K562 (cell line): ENCODE measurements at regions of chr17 and their contacts with region 1.

Region 1: DNA sequence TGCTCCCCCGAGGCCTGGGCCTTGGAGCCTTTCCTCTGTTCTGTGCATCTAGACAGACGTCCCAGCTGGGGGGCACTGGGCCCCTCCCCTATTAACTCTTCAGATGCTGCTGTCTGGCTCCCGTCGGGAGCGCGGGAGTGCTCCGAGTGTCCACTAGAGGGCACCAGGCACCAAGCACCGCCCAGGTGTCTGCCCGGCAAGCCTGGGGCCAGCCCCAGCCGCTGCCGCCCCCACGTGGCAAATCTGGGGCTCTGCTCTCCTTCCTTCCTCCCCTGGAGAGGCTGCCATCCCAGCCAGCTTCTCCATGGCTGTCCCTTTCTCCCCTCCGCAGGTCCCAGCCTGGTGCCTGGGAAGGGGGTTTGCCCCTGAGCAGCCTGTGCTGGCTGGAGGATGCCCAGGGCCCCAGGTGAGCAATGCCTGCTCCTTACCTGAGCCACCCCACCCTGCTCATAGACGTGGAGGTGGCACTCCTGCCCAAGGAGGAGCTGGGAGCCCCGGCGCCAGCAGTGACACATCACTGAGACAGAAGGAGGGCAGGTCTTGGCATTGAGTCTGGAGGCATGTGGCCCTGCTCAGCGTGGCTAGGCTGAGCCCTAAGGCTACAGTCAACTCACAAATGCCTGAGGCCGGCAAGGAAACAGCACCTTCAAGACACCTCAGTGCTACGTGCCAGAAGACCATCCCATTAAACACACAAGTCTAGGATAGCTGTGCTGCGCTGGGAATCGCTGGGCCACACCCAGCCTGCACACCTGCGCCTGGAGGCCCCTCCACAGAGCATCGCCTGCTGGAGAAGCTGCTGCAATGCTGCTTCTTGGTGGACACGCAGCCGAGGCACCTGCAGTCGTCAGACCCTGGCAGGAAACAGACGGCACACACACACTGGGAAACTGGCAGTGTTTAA is 19.7 kb downstream of the TMEM235 start:
- DNase-seq: peak; percentile 90 to 94 (median 92)
- ATAC-seq: peak; percentile 87
- H3K4me3 ChIP-seq: no peak overlapping the region
- H3K27ac ChIP-seq: no peak overlapping the region
- H3K4me1 ChIP-seq: peaks cover 32 to 80% of the 10 kb centered on the region in 2 experiments
- H3K27me3 ChIP-seq: no peaks in the 10 kb centered on the region
- CTCF ChIP-seq: peak; percentile 99 to 100 (median 100)
- EP300 ChIP-seq: no peak; the same call in 1 of the 2 replicates
- POLR2A ChIP-seq: no peak
- RAD21 ChIP-seq: peak; percentile 96 to 99

Region 2: GRCh38 chr17:78082988-78083387 is 168.2 kb before region 1 on chr17:
- CTCF ChIA-PET with region 1: interaction called, 3 read pairs
- POLR2A ChIA-PET with region 1: no interaction called
- in situ Hi-C with region 1: no loop called
- intact Hi-C with region 1: loop called (anchors 1 kb)
- DNase-seq: peak in 1 of 4 experiments; percentile 29
- ATAC-seq: no peak
- H3K4me3 ChIP-seq: no peak overlapping the region
- H3K27ac ChIP-seq: 0 out of 3 replicates have a peak overlapping the region, but pooled peaks have one; percentile 20
- H3K4me1 ChIP-seq: peaks cover 21 to 23% of the 10 kb centered on the region in 2 experiments; a peak in 4 of 5 replicates
- H3K27me3 ChIP-seq: no peaks in the 10 kb centered on the region
- CTCF ChIP-seq: no peak
- EP300 ChIP-seq: no peak
- POLR2A ChIP-seq: no peak
- RAD21 ChIP-seq: no peak

Region 3: DNA sequence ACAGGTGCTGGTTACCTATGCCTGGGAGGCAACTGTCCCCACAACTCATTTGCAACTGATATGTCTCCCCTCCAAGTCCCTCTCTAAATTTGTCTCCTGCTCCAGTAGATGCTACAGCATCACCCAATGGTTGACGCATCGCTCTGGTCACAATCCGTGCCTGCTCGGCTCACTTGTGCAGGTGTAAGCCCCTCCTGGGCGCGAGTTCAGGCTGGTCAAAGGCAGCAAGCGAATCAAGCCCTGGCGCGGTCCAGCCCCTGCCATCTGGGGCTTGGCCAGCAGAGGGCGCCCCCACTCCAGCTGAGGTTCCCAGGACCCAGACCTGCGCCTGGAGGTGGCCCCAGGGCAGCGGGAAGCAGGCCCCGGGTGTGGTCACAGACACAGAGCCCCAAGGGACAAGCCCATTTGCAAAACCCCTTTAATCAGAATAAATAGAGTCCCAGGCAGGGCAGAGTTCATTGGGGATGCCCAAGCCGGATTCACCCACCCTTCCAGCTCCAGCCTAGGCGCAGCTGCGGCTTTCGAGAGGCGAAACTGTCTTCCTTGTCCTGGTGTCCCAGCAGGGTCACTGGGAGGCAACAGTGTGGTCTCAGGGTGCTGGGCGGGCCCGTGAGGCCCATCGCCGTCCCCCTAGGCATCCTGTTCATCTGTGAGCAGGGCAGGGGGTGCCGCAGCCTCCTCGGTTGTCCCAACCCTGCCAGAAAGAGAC is 138.5 kb before region 1 on chr17:
- CTCF ChIA-PET with region 1: interaction called, 19 read pairs
- POLR2A ChIA-PET with region 1: no interaction called
- in situ Hi-C with region 1: no loop called
- intact Hi-C with region 1: no loop called
- DNase-seq: peak; percentile 80 to 88 (median 84)
- ATAC-seq: peak; percentile 92
- H3K4me3 ChIP-seq: no peak overlapping the region
- H3K27ac ChIP-seq: 0 out of 3 replicates have a peak overlapping the region, but pooled peaks have one; percentile 34
- H3K4me1 ChIP-seq: peaks cover 0 to 52% of the 10 kb centered on the region in 2 experiments; a peak in 2 of 5 replicates
- H3K27me3 ChIP-seq: no peaks in the 10 kb centered on the region
- CTCF ChIP-seq: peak; percentile 94 to 97 (median 95)
- EP300 ChIP-seq: no peak
- POLR2A ChIP-seq: peak; percentile 75
- RAD21 ChIP-seq: peak; percentile 93

Region 4: GRCh38 chr17:78300962-78301822 is 50.0 kb after region 1 on chr17:
- CTCF ChIA-PET with region 1: no interaction called
- POLR2A ChIA-PET with region 1: no interaction called
- in situ Hi-C with region 1: no loop called
- intact Hi-C with region 1: no loop called
- DNase-seq: no peak
- ATAC-seq: peak; percentile 72
- H3K4me3 ChIP-seq: no peak overlapping the region
- H3K27ac ChIP-seq: peak overlapping the region; percentile 46; the same call in 1 of the 3 replicates
- H3K4me1 ChIP-seq: peaks cover 15 to 31% of the 10 kb centered on the region in 2 experiments
- H3K27me3 ChIP-seq: no peaks in the 10 kb centered on the region
- CTCF ChIP-seq: no peak
- EP300 ChIP-seq: peak; percentile 53; the same call in 1 of the 2 replicates
- POLR2A ChIP-seq: no peak
- RAD21 ChIP-seq: no peak; a peak in 1 of 4 replicates

Region 5: DNA sequence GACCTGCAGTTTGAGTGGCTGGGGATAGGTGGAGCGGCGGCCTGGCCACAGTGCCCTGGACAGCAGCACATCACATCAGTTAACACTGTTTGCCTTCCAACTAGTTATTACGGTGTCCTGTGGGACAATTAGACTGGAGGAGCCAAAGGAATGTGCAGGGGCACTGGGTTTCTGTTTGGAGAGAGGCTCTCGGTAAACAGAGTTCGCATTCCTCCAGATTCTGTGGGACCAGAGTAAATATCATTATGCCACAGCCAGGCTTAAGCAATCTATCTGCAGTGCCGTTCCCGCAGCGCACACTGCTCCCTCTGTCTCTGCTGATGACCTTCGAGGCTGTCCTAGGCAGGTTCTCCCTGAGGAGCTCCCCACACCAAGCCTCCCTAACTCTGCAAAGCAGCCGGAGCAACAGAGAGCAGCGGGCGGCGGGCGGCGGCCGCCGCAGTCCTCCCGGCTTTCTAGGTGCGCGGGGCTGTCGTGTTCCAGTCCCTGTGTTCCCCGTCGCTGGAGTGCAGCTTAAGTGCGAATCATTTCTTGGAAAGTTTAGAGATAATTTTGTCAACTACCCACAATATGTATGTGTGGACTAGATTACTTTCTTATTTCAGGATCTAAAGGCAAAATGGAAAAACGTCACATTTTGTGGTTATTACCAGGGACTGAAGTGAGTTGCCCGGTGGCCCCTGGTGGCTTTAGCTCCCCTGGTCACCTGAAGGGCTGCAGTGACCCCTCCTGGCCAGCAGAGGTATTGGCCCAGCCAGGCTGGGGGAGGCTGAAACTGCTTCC is 170.5 kb after region 1 on chr17:
- CTCF ChIA-PET with region 1: interaction called, 37 read pairs
- POLR2A ChIA-PET with region 1: interaction called, 4 read pairs
- in situ Hi-C with region 1: no loop called
- intact Hi-C with region 1: loop called (anchors 2 kb)
- DNase-seq: peak; percentile 86 to 95 (median 92)
- ATAC-seq: peak; percentile 97
- H3K4me3 ChIP-seq: no peak overlapping the region
- H3K27ac ChIP-seq: 0 out of 3 replicates have a peak overlapping the region, but pooled peaks have one; percentile 39
- H3K4me1 ChIP-seq: peaks cover 12 to 28% of the 10 kb centered on the region in 2 experiments
- H3K27me3 ChIP-seq: no peaks in the 10 kb centered on the region
- CTCF ChIP-seq: peak; percentile 98 to 100 (median 99)
- EP300 ChIP-seq: 0 out of 2 replicates have a peak, but pooled peaks have one; percentile 21
- POLR2A ChIP-seq: no peak
- RAD21 ChIP-seq: peak; percentile 93 to 96